Adrenal gland (tissue), 19 donors: ENCODE measurements at regions of chr1 and their contacts with region 1.

Region 1: GRCh38 chr1:18907021-18907916 is 4.9 kb upstream of the ALDH4A1 start:
- DNase-seq: peak; percentile 56 to 83 (median 66)
- H3K4me3 ChIP-seq: no peak overlapping the region
- H3K27ac ChIP-seq: peak overlapping the region in 4 of 5 donors; percentile 2 to 84 (median 42)
- H3K4me1 ChIP-seq: peaks cover 5 to 26% of the 10 kb centered on the region in 2 donors
- H3K27me3 ChIP-seq: no peaks in the 10 kb centered on the region
- CTCF ChIP-seq: peak; percentile 75 to 97 (median 84)
- POLR2A ChIP-seq: no peak

Region 2: DNA sequence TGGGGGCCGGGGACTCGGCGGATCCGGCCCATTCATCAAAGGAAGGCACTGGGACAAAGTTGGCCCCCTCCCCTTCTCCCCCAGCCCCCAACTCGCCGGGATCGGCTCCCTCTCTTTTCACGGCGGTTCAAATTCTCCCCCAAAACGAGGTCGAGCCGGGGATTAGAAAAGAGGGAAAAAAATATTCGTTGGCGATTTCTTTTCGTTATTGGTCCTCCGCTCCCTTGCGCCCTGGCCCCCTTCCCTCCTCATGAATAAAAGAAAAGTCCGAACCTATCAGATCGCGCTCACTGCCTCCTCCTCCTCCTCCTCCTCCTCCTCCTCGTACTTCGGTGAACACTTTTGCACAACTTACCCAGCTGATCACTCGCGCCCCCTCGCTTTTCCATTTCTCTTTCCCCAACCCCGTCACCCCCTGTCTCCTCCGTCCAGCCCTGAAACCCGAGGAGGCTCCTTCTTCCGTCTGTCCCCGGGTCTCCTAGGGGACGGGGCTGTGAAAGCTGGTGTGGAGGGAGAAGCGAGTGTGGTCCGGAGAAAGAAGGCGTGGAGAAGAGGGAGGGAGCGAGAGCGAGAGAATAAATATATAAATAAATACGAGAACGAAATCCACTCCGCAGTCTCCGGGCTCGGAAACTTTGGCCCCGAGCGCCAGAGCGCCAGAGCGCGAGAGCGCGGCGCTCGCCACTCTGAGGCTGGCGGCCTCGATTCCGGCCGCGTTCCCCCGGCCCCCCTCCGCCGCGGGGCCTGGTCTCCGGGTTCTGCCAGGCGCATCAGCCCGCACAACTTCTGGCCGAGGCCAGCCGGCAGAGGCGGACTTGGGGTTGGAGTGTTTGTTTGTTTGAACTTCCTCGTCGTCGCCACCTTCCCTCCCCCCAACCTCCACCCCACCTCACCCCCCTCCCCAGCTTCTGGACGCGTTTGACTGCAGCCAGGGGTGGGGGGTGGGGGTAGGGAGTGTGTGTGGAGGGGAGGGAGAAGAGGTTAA is 276.5 kb before region 1 on chr1 and contains the start of gene PAX7:
- intact Hi-C with region 1: no loop called
- DNase-seq: no peak
- H3K4me3 ChIP-seq: no peak within 1 kb of the TSS
- H3K27ac ChIP-seq: no peak within 1 kb of the TSS
- H3K4me1 ChIP-seq: no peaks in the 10 kb centered on the region
- H3K27me3 ChIP-seq: peaks cover 64% of the 10 kb centered on the region
- CTCF ChIP-seq: no peak
- POLR2A ChIP-seq: no peak
- total RNA-seq, gene PAX7: not detected

Region 3: DNA sequence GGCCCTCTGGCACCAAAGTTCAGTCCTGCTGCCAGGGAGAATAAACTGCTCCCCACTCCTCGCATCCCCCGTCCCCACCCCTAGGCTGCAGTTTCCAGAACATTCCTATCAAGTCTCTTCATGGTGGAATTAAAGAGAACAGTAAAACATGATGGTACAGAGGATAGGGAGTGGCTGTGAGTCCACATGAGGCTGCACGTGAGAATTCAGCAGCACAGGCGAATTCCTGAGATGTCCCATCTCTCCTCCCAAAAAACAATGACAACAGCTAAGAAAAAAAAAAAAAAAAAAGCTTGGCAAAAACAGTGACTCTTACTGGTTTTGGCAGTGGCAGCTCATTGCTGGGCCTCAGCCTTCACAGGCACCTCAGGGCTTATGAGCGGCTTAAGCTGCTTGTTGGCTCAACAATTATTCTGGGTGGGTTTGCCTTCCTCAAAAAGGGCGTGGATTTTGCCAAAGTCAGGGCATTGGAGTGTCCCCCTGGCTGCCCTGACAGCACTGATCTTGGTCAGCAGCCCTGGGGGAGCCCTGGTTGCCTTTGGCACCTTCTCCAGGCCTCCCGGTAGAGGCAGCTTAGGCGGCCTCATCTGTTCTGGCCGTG is 55.0 kb after region 1 on chr1:
- intact Hi-C with region 1: loop called in 1 of 2 experiments (anchors 5 kb)
- DNase-seq: peak in 2 of 7 donors; percentile 39 to 58
- H3K4me3 ChIP-seq: no peak overlapping the region
- H3K27ac ChIP-seq: peak overlapping the region in 1 of 5 donors; percentile 70
- H3K4me1 ChIP-seq: no peaks in the 10 kb centered on the region
- H3K27me3 ChIP-seq: no peaks in the 10 kb centered on the region
- CTCF ChIP-seq: no peak
- POLR2A ChIP-seq: no peak

Region 4: GRCh38 chr1:18972531-18972930 is 65.3 kb after region 1 on chr1:
- intact Hi-C with region 1: loop called in 1 of 2 experiments (anchors 5 kb)
- DNase-seq: peak in 3 of 7 donors; percentile 37 to 59 (median 44)
- H3K4me3 ChIP-seq: no peak overlapping the region
- H3K27ac ChIP-seq: no peak overlapping the region
- H3K4me1 ChIP-seq: peaks cover 0 to 23% of the 10 kb centered on the region in 2 donors
- H3K27me3 ChIP-seq: no peaks in the 10 kb centered on the region
- CTCF ChIP-seq: peak; percentile 5 to 62 (median 42)
- POLR2A ChIP-seq: no peak